HepG2 (cell line): ENCODE measurements at regions of chr1 and their contacts with region 1.

Region 1: GRCh38 chr1:15046487-15047165 is 106.9 kb upstream of the TMEM51 start:
- DNase-seq: peak; percentile 48
- ATAC-seq: peak; percentile 78
- H3K4me3 ChIP-seq: no peak overlapping the region
- H3K27ac ChIP-seq: no peak overlapping the region
- H3K4me1 ChIP-seq: no peaks in the 10 kb centered on the region
- H3K27me3 ChIP-seq: no peaks in the 10 kb centered on the region
- CTCF ChIP-seq: peak; percentile 88
- EP300 ChIP-seq: no peak
- POLR2A ChIP-seq: no peak
- RAD21 ChIP-seq: peak; percentile 79

Region 2: DNA sequence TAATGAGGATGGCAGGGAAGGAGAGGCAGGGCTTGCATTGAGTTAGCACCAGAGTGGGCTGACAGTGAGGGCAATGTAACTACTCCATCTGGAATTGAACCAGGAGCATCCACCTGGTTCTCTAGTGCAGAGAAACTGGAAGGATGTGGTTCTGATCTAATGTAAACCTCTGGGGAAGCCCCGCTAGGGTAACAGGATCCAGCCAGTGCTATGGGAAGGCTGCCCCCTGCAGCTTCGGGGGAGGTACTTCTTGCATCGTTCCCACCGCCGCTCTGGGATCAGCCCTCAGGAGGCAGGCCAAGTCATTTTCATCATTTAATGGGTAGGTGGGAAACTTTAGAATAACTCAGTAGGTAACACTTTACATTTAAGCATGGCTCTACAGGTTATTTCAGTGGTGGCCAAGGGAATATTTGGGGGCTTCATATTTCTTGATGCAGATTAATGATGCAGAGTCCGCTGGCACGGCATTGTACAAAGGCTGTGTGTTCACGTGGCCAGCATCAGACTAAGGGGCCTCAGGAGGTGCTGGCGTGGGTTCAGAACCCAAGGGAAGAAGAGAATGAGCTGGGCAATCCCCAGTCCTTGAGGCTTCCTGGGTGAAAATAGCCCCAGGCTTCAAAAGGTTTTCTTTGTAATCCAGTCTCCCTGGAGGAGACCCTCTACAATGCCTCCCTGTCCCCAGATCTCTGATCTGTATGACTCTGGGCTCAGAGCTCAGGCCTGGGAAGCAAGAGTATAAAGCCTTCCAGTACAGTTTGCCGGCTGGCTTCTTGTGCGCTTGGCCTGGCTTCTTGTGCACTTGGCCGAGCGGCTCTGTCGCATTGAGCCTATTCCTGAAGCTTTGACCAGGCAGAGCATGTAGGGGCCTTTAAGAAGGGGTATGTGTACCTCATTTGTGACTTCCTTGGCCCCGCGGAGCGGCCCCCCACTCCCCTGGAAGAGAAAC is 474.5 kb before region 1 on chr1:
- CTCF ChIA-PET with region 1: no interaction called
- POLR2A ChIA-PET with region 1: no interaction called
- in situ Hi-C with region 1: loop called (anchors 25 kb)
- intact Hi-C with region 1: no loop called
- DNase-seq: no peak
- ATAC-seq: peak; percentile 69
- H3K4me3 ChIP-seq: no peak overlapping the region
- H3K27ac ChIP-seq: no peak overlapping the region
- H3K4me1 ChIP-seq: no peaks in the 10 kb centered on the region
- H3K27me3 ChIP-seq: peaks cover 0 to 11% of the 10 kb centered on the region in 2 experiments; a peak in 1 of 5 replicates
- CTCF ChIP-seq: peak; percentile 62
- EP300 ChIP-seq: no peak
- POLR2A ChIP-seq: no peak
- RAD21 ChIP-seq: no peak

Region 3: GRCh38 chr1:14778898-14779865 is 267.4 kb before region 1 on chr1:
- CTCF ChIA-PET with region 1: interaction called, 16 read pairs
- POLR2A ChIA-PET with region 1: no interaction called
- in situ Hi-C with region 1: loop called (anchors 5 kb)
- intact Hi-C with region 1: loop called (anchors 1 kb)
- DNase-seq: peak; percentile 36
- ATAC-seq: peak; percentile 66
- H3K4me3 ChIP-seq: no peak overlapping the region
- H3K27ac ChIP-seq: no peak overlapping the region
- H3K4me1 ChIP-seq: no peaks in the 10 kb centered on the region
- H3K27me3 ChIP-seq: peaks cover 1 to 22% of the 10 kb centered on the region in 2 experiments; a peak in 2 of 5 replicates
- CTCF ChIP-seq: peak; percentile 67
- EP300 ChIP-seq: no peak
- POLR2A ChIP-seq: no peak
- RAD21 ChIP-seq: peak; percentile 41; the same call in 1 of the 2 replicates

Region 4: DNA sequence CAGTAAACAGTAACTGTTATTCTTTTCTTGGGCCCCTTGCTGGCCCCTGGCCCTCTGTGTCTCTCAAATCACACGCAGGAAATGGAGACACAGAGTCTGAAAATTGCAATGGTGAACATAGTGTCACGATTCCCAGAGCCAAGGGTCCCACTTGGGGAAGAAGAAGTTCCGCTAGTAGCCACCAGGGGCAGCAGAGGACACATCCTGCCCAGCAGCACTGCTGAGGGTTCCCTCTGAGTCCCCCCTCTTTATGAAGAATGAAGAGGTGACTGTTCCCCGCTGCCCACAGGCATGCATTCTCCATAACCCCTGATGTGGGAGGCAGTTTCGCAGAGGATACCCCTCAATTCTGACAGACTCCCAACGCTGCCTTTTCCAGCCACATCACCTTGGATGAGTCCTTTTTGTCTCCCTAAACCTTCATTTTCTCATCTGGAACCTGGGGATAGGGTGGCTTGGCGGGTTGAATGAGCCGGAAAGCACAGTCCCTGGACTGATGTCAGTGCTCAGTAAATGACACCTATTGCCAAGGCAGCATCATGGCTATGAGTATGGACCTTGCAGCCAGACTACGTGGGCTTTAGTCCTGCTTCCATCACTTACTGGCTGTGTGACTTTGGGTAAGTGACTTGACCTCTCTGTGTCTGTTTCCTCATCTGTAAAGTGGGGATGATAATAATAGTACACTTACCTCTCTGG is 131.1 kb before region 1 on chr1:
- CTCF ChIA-PET with region 1: no interaction called
- POLR2A ChIA-PET with region 1: no interaction called
- in situ Hi-C with region 1: loop called (anchors 25 kb)
- intact Hi-C with region 1: no loop called
- DNase-seq: peak; percentile 39
- ATAC-seq: peak; percentile 56
- H3K4me3 ChIP-seq: no peak overlapping the region
- H3K27ac ChIP-seq: no peak overlapping the region
- H3K4me1 ChIP-seq: peaks cover 57% of the 10 kb centered on the region
- H3K27me3 ChIP-seq: no peaks in the 10 kb centered on the region; a peak in 2 of 5 replicates
- CTCF ChIP-seq: peak; percentile 74
- EP300 ChIP-seq: no peak
- POLR2A ChIP-seq: no peak
- RAD21 ChIP-seq: peak; percentile 50

Region 5: DNA sequence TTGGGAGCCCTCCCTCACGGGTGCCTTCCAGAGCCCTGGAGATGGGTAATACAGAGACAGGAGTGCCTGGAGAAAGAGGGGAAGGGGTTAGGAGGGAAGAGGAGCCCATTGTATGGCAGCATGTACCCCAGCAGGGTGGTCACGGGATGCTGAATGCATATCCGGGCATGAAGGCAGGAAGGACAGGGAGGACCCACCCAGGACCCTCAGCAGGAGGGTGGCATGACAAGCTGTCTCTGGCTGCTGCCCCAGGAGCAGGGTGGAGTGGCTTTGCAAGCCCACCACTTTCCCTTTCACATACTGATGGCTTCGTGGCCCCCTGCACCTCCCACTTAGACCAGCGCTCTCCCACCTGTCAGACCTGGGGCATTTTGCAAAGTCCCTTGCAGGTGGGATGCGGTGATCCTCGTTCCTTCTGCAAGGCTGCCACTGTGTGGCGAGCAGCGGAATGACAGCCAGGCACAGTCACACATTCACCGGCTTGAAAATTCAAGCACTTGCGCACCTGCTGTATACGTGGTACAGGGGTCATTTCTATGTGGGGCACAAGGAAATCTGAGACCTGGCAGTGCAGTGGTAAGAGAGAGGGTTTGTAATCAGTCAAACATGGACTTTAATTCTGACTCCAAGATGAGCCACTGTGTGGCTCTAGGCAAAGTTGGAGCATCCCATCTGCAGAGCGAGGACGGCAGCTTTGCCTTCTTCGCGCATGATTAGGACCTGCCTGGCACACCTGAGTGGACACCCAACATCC is 53.7 kb after region 1 on chr1:
- CTCF ChIA-PET with region 1: no interaction called
- POLR2A ChIA-PET with region 1: no interaction called
- in situ Hi-C with region 1: no loop called
- intact Hi-C with region 1: no loop called
- DNase-seq: peak; percentile 20
- ATAC-seq: peak; percentile 79
- H3K4me3 ChIP-seq: no peak overlapping the region
- H3K27ac ChIP-seq: no peak overlapping the region
- H3K4me1 ChIP-seq: no peaks in the 10 kb centered on the region
- H3K27me3 ChIP-seq: peaks cover 0 to 52% of the 10 kb centered on the region in 2 experiments; a peak in 3 of 5 replicates
- CTCF ChIP-seq: peak; percentile 96
- EP300 ChIP-seq: no peak
- POLR2A ChIP-seq: no peak
- RAD21 ChIP-seq: peak; percentile 85